Activated CD4-positive, alpha-beta memory T cell treated with anti-CD3 and anti-CD28 coated beads for 36 hours (primary cell): ENCODE measurements at regions of chr3 and their contacts with region 1.

Region 1: DNA sequence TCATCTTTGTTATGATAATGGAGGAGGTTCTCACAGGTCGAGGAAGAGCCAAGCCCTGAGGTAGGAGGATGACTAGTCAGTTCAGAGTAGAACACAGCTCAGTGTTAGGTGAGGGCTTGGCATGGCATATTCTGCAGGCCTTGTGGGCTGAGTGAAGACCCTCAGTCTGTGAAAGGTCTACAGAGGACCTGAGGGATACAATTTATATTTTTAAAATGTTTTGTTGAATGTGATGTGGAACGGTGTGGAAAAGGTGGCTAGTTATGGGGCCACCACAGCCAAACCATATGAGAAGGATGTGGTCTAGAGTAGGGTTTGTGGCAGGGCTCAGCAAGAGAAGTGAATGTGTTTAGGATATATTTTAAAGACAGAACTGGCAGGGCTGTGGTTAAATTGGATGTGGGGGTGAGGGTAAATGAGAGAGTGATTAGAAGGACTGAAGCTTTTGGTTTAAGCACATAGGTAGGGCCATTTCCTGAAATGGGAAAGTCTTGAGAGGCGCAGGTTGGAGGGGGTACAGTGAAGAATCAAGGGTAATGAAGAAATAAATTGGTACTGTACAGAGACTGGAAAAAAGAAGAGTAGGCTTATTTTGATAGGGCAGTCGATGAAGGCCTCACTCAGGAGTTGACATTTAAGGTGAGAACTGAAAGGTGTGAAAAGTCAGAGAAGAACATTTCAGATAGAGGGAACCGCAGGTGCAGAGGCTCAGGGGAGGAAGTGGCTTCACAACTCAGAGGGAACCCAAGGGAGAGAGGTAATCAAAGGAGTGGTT is 60.5 kb downstream of the SPTSSB start:
- DNase-seq: peak; percentile 77
- H3K4me3 Mint-ChIP-seq: no peak overlapping the region
- H3K27ac Mint-ChIP-seq: peak overlapping the region; percentile 7
- H3K4me1 Mint-ChIP-seq: peaks cover 49% of the 10 kb centered on the region
- H3K27me3 Mint-ChIP-seq: peaks cover 3% of the 10 kb centered on the region

Region 2: GRCh38 chr3:161325059-161325458 is 14.2 kb after region 1 on chr3:
- CTCF ChIA-PET with region 1: no interaction called
- POLR2A ChIA-PET with region 1: no interaction called
- intact Hi-C with region 1: no loop called
- DNase-seq: no peak
- H3K4me3 Mint-ChIP-seq: no peak overlapping the region
- H3K27ac Mint-ChIP-seq: no peak overlapping the region
- H3K4me1 Mint-ChIP-seq: no peaks in the 10 kb centered on the region
- H3K27me3 Mint-ChIP-seq: peaks cover 5% of the 10 kb centered on the region

Region 3: GRCh38 chr3:161349529-161350278 is 38.9 kb after region 1 on chr3:
- CTCF ChIA-PET with region 1: interaction called, 3 read pairs
- POLR2A ChIA-PET with region 1: no interaction called
- intact Hi-C with region 1: loop called (anchors 1 kb)
- DNase-seq: peak; percentile 31
- H3K4me3 Mint-ChIP-seq: no peak overlapping the region
- H3K27ac Mint-ChIP-seq: peak overlapping the region; percentile 18
- H3K4me1 Mint-ChIP-seq: peaks cover 27% of the 10 kb centered on the region
- H3K27me3 Mint-ChIP-seq: peaks cover 9% of the 10 kb centered on the region

Region 4: DNA sequence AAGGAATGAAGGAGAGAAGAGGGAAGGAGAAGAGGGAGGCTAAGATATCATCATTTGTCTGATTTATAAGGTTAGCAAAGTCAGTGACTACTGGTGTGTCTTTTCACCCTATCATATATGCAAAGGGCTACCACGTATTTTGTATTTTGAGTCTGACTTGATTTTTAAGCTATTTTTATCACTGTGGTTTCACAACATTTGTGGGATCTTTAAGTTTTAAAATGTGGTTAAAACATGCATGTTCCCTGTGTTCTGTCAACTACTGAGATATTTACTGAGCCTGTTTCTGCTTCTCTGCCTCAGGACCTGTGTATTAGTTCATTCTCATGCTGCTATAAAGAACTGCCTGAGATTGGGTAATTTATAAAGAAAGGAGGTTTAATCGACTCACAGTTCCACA is 83.0 kb after region 1 on chr3:
- CTCF ChIA-PET with region 1: interaction called, 5 read pairs
- POLR2A ChIA-PET with region 1: no interaction called
- intact Hi-C with region 1: loop called (anchors 1 kb)
- DNase-seq: no peak
- H3K4me3 Mint-ChIP-seq: no peak overlapping the region
- H3K27ac Mint-ChIP-seq: no peak overlapping the region
- H3K4me1 Mint-ChIP-seq: peaks cover 42% of the 10 kb centered on the region
- H3K27me3 Mint-ChIP-seq: peaks cover 3% of the 10 kb centered on the region

Region 5: GRCh38 chr3:161409069-161409468 is 98.2 kb after region 1 on chr3:
- CTCF ChIA-PET with region 1: interaction called, 6 read pairs
- POLR2A ChIA-PET with region 1: no interaction called
- intact Hi-C with region 1: loop called (anchors 2 kb)
- DNase-seq: peak; percentile 23
- H3K4me3 Mint-ChIP-seq: no peak overlapping the region
- H3K27ac Mint-ChIP-seq: no peak overlapping the region
- H3K4me1 Mint-ChIP-seq: peaks cover 18% of the 10 kb centered on the region
- H3K27me3 Mint-ChIP-seq: peaks cover 5% of the 10 kb centered on the region